HEK293T (cell line): ENCODE measurements at regions of chr17 and their contacts with region 1.

Region 1: GRCh38 chr17:76014184-76014924 is 12.8 kb downstream of the EVPL start:
- DNase-seq: peak; percentile 93

Region 2: DNA sequence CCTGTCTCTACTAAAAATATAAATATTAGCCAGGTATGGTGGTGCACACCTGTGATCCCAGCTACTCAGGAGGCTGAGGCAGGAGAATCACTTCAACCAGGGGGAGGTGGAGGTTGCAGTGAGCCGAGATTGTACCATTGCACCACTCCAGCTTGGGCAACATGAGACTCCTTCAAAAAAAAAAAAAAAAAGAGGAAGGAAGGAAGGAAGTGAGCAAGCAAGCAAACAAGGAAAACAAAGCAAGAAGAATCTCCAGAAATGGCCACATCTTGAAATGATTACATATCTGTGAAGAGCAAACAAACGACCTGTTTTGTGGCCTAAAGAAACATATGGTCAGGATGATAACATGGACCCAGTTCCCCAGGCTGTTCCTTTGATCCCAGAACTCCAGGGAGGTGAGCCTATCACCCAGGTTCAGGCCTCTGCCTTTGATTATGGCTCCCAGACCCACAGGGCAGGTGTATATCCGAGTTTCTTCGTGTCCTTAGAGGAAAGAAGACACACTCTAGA is 44.3 kb before region 1 on chr17:
- CTCF ChIA-PET with region 1: no interaction called
- POLR2A ChIA-PET with region 1: no interaction called
- DNase-seq: no peak

Region 3: GRCh38 chr17:76000016-76000754 is 14.2 kb before region 1 on chr17:
- CTCF ChIA-PET with region 1: interaction called, 22 read pairs
- POLR2A ChIA-PET with region 1: no interaction called
- DNase-seq: peak; percentile 90

Region 4: DNA sequence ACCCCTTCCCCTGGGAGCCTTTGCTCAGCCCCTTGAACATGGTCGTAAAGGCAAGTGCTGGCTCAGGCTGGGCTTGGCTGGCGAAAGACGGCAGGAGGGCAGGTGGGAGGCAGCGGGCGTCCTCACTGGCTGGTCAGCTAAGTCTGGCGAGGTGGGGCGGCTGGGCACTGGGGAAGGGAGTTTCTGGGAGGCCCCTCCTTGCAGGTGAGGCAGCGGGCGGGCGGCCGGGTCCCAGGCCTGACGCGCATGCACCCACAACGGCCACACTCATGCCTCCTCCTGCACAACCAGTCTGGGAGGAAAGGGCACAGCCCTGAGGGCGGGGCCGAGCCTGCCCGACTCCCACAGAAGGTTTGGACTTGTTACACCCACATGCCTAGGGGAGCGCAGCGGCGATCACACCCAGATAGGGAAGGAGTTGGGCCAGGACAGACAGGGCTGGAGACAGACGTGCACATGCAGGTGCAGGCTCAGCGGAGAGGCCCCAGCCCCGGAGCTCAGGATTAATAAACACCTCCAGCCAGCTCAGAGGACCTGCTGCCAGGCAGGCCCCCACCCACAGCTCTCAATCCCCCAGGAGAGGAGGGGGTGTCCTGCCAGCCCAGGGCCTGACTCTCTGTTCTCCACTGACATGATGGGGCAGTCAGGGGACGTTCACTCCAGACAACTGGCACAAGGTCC is 12.9 kb after region 1 on chr17 and contains the start of gene EVPL:
- CTCF ChIA-PET with region 1: interaction called, 15 read pairs
- POLR2A ChIA-PET with region 1: no interaction called
- DNase-seq: no peak